ENCODE measurements at regions of chr4 and their contacts with region 1.

Region 1: DNA sequence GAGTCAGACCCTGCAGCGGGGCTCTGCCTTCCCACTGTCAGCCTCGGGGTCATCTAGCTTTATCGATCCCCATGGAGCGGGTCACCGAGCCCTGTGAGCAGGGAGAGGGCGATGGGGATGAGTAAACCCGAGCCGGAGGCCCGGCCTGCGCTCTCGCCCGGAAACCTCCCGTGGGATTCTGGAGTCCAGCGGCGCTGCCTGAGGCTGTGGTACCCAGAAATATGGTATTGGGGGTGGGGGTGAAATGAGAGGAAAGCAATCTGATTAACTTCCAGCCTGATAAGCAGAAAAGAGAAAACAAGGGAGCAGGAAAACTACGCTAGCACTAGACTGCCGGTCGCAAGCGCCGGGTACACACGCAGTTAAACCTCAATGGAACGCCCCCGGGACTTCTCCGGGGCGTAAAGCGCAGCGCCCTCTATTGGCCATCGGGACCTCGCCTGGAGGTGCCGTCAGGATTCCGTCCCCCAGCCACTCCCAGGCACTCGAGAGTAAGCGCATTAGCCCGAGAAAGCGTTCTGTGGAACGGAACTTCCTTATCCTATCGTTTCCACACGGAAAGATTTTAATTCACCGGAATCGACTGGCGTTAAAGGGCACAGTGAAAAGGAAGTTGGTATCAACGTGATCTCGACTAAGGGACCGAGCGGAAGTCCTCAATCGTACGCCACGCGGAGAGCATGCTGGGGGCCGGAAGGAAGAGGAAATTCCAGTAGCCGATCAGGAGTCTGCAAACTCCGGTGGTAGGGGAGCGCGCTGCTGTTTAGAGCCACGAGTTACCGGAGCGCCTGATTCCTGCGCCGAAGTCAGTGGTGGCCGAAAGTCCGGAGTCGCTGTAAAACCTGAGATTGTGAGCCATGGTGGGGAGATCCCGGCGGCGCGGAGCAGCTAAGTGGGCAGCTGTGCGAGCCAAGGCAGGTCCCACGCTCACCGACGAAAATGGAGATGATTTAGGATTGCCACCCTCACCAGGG is at the start of gene UTP3:
- DNase-seq: peak; percentile 85 to 98
- ATAC-seq: peak; percentile 85 to 96 (median 89)
- H3K4me3 ChIP-seq: peak within 1 kb of the TSS; percentile 93
- H3K4me3 Mint-ChIP-seq: peak within 1 kb of the TSS; percentile 100
- H3K27ac ChIP-seq: peak within 1 kb of the TSS; percentile 97
- H3K27ac Mint-ChIP-seq: peak within 1 kb of the TSS; percentile 99
- H3K4me1 ChIP-seq: peaks cover 25% of the 10 kb centered on the region
- H3K4me1 Mint-ChIP-seq: peaks cover 33 to 36% of the 10 kb centered on the region in 2 donors
- H3K27me3 ChIP-seq: no peaks in the 10 kb centered on the region
- H3K27me3 Mint-ChIP-seq: peaks cover 0 to 2% of the 10 kb centered on the region in 2 donors
- CTCF ChIP-seq: peak; percentile 97
- total RNA-seq, gene UTP3: 22.3 to 23.1 (median 22.6) TPM

Region 2: GRCh38 chr4:70734168-70734954 is 46.3 kb after region 1 on chr4:
- intact Hi-C with region 1: loop called (anchors 1 kb)
- DNase-seq: peak in 1 of 2 donors; percentile 79
- ATAC-seq: peak; percentile 91 to 95 (median 94)
- H3K4me3 ChIP-seq: peak overlapping the region; percentile 39
- H3K4me3 Mint-ChIP-seq: peak overlapping the region; percentile 83
- H3K27ac ChIP-seq: peak overlapping the region; percentile 91
- H3K27ac Mint-ChIP-seq: peak overlapping the region; percentile 84 to 89
- H3K4me1 ChIP-seq: peaks cover 21% of the 10 kb centered on the region
- H3K4me1 Mint-ChIP-seq: peaks cover 38 to 43% of the 10 kb centered on the region in 2 donors
- H3K27me3 ChIP-seq: no peaks in the 10 kb centered on the region
- H3K27me3 Mint-ChIP-seq: no peaks in the 10 kb centered on the region
- CTCF ChIP-seq: no peak

Region 3: GRCh38 chr4:70839589-70840093 is 151.5 kb after region 1 on chr4 and contains the start of gene GRSF1:
- intact Hi-C with region 1: loop called (anchors 1 kb)
- DNase-seq: peak; percentile 89 to 97
- ATAC-seq: peak; percentile 88 to 97 (median 88)
- H3K4me3 ChIP-seq: peak within 1 kb of the TSS; percentile 46
- H3K4me3 Mint-ChIP-seq: peak within 1 kb of the TSS; percentile 98
- H3K27ac ChIP-seq: peak within 1 kb of the TSS; percentile 80
- H3K27ac Mint-ChIP-seq: peak within 1 kb of the TSS; percentile 95 to 97
- H3K4me1 ChIP-seq: peaks cover 23% of the 10 kb centered on the region
- H3K4me1 Mint-ChIP-seq: peaks cover 20 to 27% of the 10 kb centered on the region in 2 donors
- H3K27me3 ChIP-seq: no peaks in the 10 kb centered on the region
- H3K27me3 Mint-ChIP-seq: no peaks in the 10 kb centered on the region
- CTCF ChIP-seq: no peak
- total RNA-seq, gene GRSF1: 33.4 to 50.8 (median 43.0) TPM

Measured in natural killer cell (primary cell).